AG04449 (cell line): ENCODE measurements at regions of chr17 and their contacts with region 1.

Region 1: DNA sequence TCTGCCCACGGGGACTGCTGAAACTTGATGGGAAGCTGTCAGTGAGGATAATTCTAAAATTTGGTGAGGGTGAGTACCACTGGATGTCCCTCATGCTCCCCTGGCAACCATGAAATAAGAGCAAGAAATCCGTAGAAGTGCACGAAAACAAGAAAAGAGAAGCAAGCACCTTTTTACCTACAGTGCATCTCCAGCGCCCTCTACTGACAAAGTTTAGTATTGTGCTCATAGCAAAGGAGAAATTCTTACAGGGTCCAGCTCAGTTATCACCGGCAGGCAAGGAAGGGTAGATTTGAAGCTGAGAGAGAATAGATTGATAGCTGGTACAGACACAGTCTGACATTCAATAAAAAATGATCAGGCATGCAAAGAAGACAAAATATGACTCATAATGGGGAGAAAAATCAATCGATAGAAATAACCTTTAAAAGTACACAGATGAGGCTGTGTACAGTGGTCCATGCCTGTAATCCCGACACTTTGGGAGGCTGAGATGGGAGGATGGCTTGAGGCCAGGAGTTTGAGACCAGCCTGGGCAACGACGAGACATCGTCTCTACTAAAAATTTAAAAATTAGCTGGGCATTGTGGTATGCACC is 28.3 kb upstream of the TEX2 start:
- DNase-seq: no peak
- H3K4me3 ChIP-seq: no peak overlapping the region
- CTCF ChIP-seq: peak; percentile 7

Region 2: DNA sequence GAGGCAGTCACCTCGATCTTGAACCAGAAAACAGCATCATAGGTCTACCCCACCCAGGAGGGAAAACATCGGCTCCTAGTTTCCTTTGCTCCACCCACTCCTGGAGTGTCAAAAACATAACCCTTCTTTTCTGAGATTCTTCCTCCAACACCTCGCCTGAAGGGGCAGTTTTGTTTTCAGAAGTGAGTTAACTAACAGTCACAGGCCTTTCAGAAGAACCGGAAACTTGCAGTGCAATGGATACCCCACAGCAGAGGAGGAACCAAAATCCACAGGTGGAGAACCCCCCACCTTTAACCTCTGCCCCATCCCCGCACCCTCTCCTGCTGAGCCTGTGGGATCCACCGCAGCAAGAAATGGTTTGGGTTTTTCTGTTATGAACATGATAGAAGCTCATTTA is 20.5 kb before region 1 on chr17:
- CTCF ChIA-PET with region 1: no interaction called
- POLR2A ChIA-PET with region 1: no interaction called
- DNase-seq: no peak
- H3K4me3 ChIP-seq: no peak overlapping the region
- CTCF ChIP-seq: no peak

Region 3: GRCh38 chr17:64306850-64307463 is 15.6 kb after region 1 on chr17:
- CTCF ChIA-PET with region 1: interaction called, 17 read pairs
- POLR2A ChIA-PET with region 1: no interaction called
- DNase-seq: peak; percentile 2
- H3K4me3 ChIP-seq: no peak overlapping the region
- CTCF ChIP-seq: peak; percentile 59

Region 4: DNA sequence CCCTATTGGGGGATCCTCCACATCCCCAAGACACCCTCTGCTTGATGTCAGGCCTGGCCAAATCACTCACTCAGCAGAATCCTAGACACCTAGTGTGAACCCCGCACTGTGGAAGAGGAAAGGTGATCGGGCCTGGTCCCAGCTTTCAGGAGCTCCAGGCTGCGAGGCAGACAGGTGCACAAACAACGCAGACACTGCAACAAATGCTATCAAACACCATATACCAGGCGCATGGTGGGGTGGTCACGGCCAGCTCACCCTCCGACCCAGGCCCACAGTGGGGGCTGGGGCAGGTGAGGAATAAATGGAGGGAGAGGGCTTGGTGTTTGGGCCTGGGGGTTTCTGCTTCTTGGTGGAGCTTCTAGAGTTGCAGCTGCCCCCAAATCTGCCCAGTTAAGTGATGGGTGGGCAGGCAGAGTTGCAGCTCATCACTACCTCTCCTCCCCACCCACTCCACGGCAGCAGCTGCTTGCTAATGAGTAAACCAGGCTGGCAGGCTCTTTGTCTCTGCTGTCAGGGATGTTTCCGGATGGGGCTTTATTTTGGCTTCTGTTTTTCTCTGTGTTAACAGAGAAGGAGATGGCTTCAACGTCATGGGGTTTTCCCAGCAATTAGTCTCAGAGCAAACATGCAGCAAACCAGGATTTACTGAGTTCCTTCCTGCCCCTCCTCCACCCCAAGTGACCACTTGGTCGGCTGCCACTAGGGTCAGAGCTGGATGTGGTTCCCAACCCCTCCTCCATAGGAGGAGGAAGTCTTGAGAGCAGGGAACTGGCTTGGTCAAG is 52.7 kb after region 1 on chr17:
- CTCF ChIA-PET with region 1: no interaction called
- POLR2A ChIA-PET with region 1: no interaction called
- DNase-seq: peak; percentile 24
- H3K4me3 ChIP-seq: no peak overlapping the region
- CTCF ChIP-seq: no peak